ENCODE measurements at regions of chr1 and their contacts with region 1.

Region 1: DNA sequence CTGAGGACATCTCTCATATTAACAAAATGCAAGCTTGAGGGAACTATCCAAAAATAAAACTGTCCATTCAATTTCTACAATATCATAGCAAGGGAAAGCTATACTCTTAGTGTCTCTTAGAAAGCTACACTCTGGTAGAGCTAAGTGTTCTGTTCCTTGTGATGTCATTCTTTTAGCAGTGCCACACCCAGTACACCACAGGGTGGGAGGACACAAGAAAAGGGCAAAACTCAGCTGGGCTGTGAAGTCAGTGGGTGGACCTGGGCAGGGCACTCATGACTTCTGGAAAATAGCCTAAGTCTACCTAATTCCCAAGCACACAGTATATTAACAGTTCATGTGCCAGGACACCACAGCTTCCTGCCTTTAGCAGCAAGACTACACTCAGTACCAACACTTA is 42.2 kb upstream of the TNFSF4 start:
- DNase-seq: no peak
- H3K4me3 ChIP-seq: no peak overlapping the region
- H3K4me3 Mint-ChIP-seq: no peak overlapping the region
- H3K27ac ChIP-seq: no peak overlapping the region
- H3K27ac Mint-ChIP-seq: no peak overlapping the region
- H3K4me1 ChIP-seq: no peaks in the 10 kb centered on the region
- H3K4me1 Mint-ChIP-seq: no peaks in the 10 kb centered on the region
- H3K27me3 ChIP-seq: no peaks in the 10 kb centered on the region
- H3K27me3 Mint-ChIP-seq: no peaks in the 10 kb centered on the region

Region 2: GRCh38 chr1:173297798-173298391 is 48.5 kb after region 1 on chr1:
- CTCF ChIA-PET with region 1: no interaction called
- POLR2A ChIA-PET with region 1: no interaction called
- intact Hi-C with region 1: loop called (anchors 5 kb)
- DNase-seq: no peak
- H3K4me3 ChIP-seq: no peak overlapping the region
- H3K4me3 Mint-ChIP-seq: peak overlapping the region in 4 of 8 donors; percentile 3 to 43 (median 29)
- H3K27ac ChIP-seq: no peak overlapping the region
- H3K27ac Mint-ChIP-seq: peak overlapping the region in 5 of 7 donors; percentile 8 to 59 (median 42)
- H3K4me1 ChIP-seq: peaks cover 11% of the 10 kb centered on the region
- H3K4me1 Mint-ChIP-seq: peaks cover 15 to 32% (median 23%) of the 10 kb centered on the region in 4 donors
- H3K27me3 ChIP-seq: no peaks in the 10 kb centered on the region
- H3K27me3 Mint-ChIP-seq: no peaks in the 10 kb centered on the region